ENCODE measurements at regions of chr9 and their contacts with region 1.

Region 1: GRCh38 chr9:114474425-114474824 is 30.8 kb downstream of the WHRN start:
- DNase-seq: no peak
- H3K4me3 ChIP-seq: no peak overlapping the region
- H3K27ac ChIP-seq: no peak overlapping the region
- H3K4me1 ChIP-seq: no peaks in the 10 kb centered on the region
- H3K27me3 ChIP-seq: no peaks in the 10 kb centered on the region
- CTCF ChIP-seq: no peak
- POLR2A ChIP-seq: no peak

Region 2: GRCh38 chr9:113876151-113876992 is 598.1 kb before region 1 on chr9 and contains the start of gene ZNF618:
- intact Hi-C with region 1: no loop called
- DNase-seq: no peak
- H3K4me3 ChIP-seq: peak within 1 kb of the TSS; percentile 95 to 100 (median 96)
- H3K27ac ChIP-seq: peak within 1 kb of the TSS; percentile 83 to 91
- H3K4me1 ChIP-seq: peaks cover 0 to 3% of the 10 kb centered on the region in 2 donors
- H3K27me3 ChIP-seq: no peaks in the 10 kb centered on the region
- CTCF ChIP-seq: no peak
- POLR2A ChIP-seq: no peak
- total RNA-seq, gene ZNF618: 4.6 to 11.8 (median 10.4) TPM

Region 3: DNA sequence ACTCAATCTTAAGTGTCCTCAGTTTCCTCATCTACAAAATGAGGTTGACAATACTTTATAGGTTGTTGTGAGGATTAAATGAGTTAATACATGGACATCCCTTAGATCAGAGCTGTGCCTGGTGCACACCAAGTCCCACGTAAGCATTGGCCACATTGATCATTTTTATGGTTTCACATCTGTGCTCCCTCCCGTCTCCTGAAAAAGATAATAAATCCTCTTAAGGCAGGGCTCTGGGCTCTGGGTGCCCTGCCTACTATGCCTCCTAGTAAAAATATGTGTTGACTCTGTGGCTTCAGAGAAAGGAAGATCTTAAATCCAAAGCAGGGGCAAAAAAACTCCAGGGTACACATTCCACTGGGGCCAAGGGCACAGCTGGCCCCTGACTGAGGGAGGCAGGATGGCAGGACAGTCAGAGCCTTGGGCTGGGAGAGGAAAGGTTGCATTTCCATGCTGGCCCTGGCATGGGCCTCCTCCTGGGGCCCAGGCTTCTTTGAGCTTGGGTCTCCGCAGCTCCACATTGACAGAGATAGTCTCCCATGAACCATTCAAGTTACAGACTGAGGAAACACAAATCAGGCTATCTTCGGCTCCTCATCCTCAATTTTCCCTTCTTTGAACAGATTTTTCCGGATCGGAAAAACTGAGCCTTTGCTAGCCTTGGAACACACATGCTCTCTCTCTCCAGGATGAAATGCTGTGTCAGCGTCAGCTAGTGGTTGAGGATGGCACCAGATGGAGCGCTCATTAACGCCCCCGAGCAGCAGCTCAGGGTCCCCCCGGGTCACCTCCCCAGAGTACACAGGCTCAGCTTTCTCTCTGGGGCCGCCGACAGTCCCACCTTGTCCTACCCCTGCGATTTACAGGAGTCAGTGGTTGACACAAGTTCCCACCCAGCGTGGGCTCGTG is 352.9 kb before region 1 on chr9:
- intact Hi-C with region 1: no loop called
- DNase-seq: no peak
- H3K4me3 ChIP-seq: no peak overlapping the region
- H3K27ac ChIP-seq: no peak overlapping the region
- H3K4me1 ChIP-seq: no peaks in the 10 kb centered on the region
- H3K27me3 ChIP-seq: no peaks in the 10 kb centered on the region
- CTCF ChIP-seq: no peak
- POLR2A ChIP-seq: no peak

Region 4: GRCh38 chr9:114501796-114502682 is 27.6 kb after region 1 on chr9:
- intact Hi-C with region 1: loop called (anchors 1 kb)
- DNase-seq: no peak
- H3K4me3 ChIP-seq: peak overlapping the region in 2 of 3 donors; percentile 80 to 82
- H3K27ac ChIP-seq: peak overlapping the region; percentile 87 to 90
- H3K4me1 ChIP-seq: peaks cover 0 to 4% of the 10 kb centered on the region in 2 donors
- H3K27me3 ChIP-seq: no peaks in the 10 kb centered on the region
- CTCF ChIP-seq: peak in 1 of 3 donors; percentile 19
- POLR2A ChIP-seq: no peak